ENCODE measurements at regions of chr14 and their contacts with region 1.

Region 1: GRCh38 chr14:65206448-65207096 is 104.3 kb upstream of the MAX start:
- DNase-seq: peak; percentile 91
- ATAC-seq: peak; percentile 85
- H3K4me3 ChIP-seq: no peak overlapping the region
- H3K27ac ChIP-seq: no peak overlapping the region
- H3K4me1 ChIP-seq: peaks cover 11% of the 10 kb centered on the region
- H3K27me3 ChIP-seq: no peaks in the 10 kb centered on the region
- CTCF ChIP-seq: no peak
- POLR2A ChIP-seq: no peak
- RAD21 ChIP-seq: no peak

Region 2: DNA sequence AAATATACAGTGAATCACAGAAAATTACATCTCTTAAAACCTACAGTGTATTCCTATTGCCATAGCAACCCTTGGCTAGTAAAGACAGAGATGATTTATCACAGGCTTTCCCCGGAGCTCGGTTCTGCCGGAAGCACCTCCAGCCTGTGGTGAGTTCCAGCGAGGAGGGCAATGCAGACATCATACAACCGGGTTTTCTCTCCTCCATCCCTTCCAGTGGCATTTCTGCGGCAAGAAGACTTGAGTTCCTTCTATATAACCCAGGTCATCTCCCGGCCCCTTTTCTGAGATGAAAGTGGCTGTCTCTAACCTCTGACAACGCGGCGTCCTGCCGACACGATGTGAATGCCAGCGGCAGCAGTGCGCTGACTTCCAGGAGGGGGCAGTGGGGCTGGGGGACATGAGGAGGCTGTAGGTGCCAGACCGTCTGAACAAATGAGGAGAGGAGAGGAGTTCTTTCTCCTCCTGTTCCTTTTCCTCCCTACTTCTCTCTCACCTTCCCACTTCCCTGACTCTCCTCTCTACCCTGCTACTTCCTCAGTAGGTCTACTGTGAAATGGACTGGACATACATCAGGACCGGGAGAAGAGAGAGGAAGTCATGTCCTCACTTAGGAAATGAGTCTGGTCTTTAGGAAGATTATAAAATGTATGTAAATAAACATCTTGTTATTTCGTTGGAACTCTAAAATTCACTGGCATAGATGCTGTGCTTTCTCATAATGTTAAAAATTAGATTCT is 35.6 kb before region 1 on chr14:
- CTCF ChIA-PET with region 1: no interaction called
- POLR2A ChIA-PET with region 1: no interaction called
- dilution Hi-C with region 1: no loop called
- in situ Hi-C with region 1: no loop called
- intact Hi-C with region 1: loop called (anchors 5 kb)
- DNase-seq: peak; percentile 81
- ATAC-seq: peak; percentile 66
- H3K4me3 ChIP-seq: peak overlapping the region; percentile 33
- H3K27ac ChIP-seq: no peak overlapping the region
- H3K4me1 ChIP-seq: peaks cover 11% of the 10 kb centered on the region
- H3K27me3 ChIP-seq: no peaks in the 10 kb centered on the region
- CTCF ChIP-seq: peak; percentile 39
- POLR2A ChIP-seq: no peak
- RAD21 ChIP-seq: peak; percentile 33; the same call in 1 of the 2 replicates

Region 3: GRCh38 chr14:65333943-65334687 is 127.5 kb after region 1 on chr14:
- CTCF ChIA-PET with region 1: no interaction called
- POLR2A ChIA-PET with region 1: no interaction called
- dilution Hi-C with region 1: no loop called
- in situ Hi-C with region 1: no loop called
- intact Hi-C with region 1: loop called (anchors 5 kb)
- DNase-seq: peak; percentile 86
- ATAC-seq: peak; percentile 81
- H3K4me3 ChIP-seq: no peak overlapping the region
- H3K27ac ChIP-seq: peak overlapping the region; percentile 88
- H3K4me1 ChIP-seq: peaks cover 22% of the 10 kb centered on the region
- H3K27me3 ChIP-seq: no peaks in the 10 kb centered on the region
- CTCF ChIP-seq: no peak
- POLR2A ChIP-seq: no peak
- RAD21 ChIP-seq: no peak

Region 4: GRCh38 chr14:65637780-65638179 is 431.2 kb after region 1 on chr14:
- CTCF ChIA-PET with region 1: no interaction called
- POLR2A ChIA-PET with region 1: no interaction called
- dilution Hi-C with region 1: no loop called
- in situ Hi-C with region 1: no loop called
- intact Hi-C with region 1: no loop called
- DNase-seq: peak; percentile 1
- ATAC-seq: no peak
- H3K4me3 ChIP-seq: no peak overlapping the region
- H3K27ac ChIP-seq: no peak overlapping the region
- H3K4me1 ChIP-seq: no peaks in the 10 kb centered on the region
- H3K27me3 ChIP-seq: no peaks in the 10 kb centered on the region
- CTCF ChIP-seq: no peak
- POLR2A ChIP-seq: no peak
- RAD21 ChIP-seq: no peak